ENCODE measurements at regions of chr11 and their contacts with region 1.

Region 1: DNA sequence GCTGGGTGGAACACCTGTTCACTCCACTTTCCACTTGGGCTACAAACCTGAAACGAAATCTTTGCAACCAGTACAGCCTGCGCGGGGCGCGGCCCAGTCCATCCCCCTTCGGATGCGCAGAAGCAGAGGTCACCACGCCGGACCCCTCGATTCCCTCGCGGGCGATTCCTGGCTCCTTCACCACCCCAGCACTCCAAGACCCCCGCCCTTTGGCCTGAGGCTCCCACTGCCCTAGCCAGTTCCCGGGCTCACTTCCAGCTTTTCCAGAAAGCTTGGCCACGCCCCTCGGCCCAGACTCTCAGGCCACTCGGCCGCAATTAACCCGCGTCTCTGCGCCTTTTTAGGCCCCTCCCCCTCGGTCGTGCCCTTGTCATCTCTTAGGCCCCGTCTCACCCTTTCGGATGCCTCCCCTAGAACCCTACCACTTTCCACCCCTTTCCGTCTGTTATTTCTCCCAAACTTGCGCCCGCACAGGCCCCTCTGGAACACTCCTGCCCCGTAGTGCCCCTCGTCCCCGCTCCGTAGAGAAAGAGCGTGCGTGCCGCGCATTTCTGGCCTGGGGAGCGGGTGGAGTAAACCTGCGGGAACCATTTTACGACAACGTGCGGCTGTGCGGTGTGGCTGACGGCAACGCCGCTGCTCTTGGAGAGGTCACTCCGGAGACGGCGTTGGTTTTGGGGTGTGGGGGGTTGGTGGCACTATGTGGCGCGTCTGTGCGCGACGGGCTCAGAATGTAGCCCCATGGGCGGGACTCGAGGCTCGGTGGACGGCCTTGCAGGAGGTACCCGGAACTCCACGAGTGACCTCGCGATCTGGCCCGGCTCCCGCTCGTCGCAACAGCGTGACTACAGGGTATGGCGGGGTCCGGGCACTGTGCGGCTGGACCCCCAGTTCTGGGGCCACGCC is at the start of gene DLAT:
- DNase-seq: peak; percentile 88
- H3K4me3 Mint-ChIP-seq: peak within 1 kb of the TSS; percentile 91
- H3K27ac Mint-ChIP-seq: peak within 1 kb of the TSS; percentile 95
- H3K4me1 Mint-ChIP-seq: peaks cover 7% of the 10 kb centered on the region
- H3K27me3 Mint-ChIP-seq: no peaks in the 10 kb centered on the region
- CTCF ChIP-seq: no peak
- total RNA-seq, gene DLAT: 43.3 and 46.7 TPM in 2 replicates

Region 2: DNA sequence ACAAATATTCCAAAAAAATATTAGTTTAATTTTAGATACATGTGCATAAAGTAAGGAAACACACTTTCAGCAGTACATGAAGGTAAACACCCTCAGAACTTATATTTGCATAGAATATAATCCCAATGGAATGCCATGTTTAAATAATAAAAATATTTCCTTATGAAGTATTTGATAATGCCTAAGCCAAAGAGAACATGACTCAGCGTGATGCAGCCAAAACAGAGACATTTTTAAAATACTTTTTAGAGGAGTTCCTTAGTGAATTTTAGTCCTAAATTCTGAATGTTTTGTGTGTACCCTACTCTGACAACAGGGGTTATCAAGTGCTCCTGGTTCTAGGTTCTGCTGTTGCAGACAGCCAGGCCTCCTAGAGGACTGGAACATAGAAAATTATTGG is 818.6 kb before region 1 on chr11:
- CTCF ChIA-PET with region 1: no interaction called
- POLR2A ChIA-PET with region 1: no interaction called
- intact Hi-C with region 1: no loop called
- DNase-seq: peak; percentile 6
- H3K4me3 Mint-ChIP-seq: no peak overlapping the region
- H3K27ac Mint-ChIP-seq: peak overlapping the region; percentile 17
- H3K4me1 Mint-ChIP-seq: peaks cover 10% of the 10 kb centered on the region
- H3K27me3 Mint-ChIP-seq: no peaks in the 10 kb centered on the region
- CTCF ChIP-seq: no peak

Region 3: DNA sequence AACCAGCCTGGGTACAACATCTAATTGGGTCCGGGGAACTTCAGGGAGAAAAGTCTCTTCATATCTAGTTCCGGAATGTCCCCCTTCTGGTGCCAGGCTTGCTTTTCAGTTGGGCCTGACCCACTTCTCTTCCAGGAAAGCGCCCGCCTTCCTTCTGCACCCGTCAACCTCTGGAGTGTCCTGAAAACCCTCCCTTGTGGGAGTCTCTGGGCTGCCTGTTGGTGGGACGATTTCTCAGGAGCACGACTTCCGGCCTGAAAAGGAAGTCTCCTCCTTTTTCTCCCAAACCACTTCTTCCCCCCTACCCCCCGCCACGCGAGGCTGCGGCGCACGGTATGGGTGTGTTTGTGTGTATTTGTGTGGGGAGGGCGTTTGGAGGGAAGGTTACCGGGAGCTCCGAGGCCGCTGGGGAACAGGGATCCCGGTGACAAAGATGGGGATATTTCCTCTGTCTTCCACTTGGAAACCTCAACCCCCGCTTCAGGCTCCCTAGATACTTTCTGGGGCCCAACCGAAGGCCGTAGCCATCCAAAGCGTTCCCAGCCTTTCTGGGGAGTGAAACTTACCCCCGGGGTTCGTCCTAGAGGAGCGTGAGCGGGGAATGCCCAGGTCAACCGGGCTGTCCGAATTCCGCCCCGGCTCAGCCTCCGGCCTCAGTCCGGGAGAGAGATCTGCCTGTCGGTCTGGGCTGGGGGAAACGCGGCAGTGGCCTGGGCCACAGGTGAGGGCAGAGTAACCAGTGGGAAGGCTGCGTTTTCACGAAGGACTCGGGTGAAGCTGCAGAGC is 49.2 kb after region 1 on chr11 and contains the start of gene NKAPD1:
- CTCF ChIA-PET with region 1: no interaction called
- POLR2A ChIA-PET with region 1: interaction called, 12 read pairs
- intact Hi-C with region 1: no loop called
- DNase-seq: peak; percentile 82
- H3K4me3 Mint-ChIP-seq: peak within 1 kb of the TSS; percentile 82
- H3K27ac Mint-ChIP-seq: peak within 1 kb of the TSS; percentile 99
- H3K4me1 Mint-ChIP-seq: peaks cover 26% of the 10 kb centered on the region
- H3K27me3 Mint-ChIP-seq: no peaks in the 10 kb centered on the region
- CTCF ChIP-seq: no peak
- total RNA-seq, gene NKAPD1: 25.1 and 27.5 TPM in 2 replicates

Measured in MCF 10A (cell line).